GM10248 (cell line): ENCODE measurements at regions of chr17 and their contacts with region 1.

Region 1: GRCh38 chr17:75199886-75200618 is 5.4 kb upstream of the NUP85 start:
- DNase-seq: no peak
- CTCF ChIP-seq: no peak

Region 2: DNA sequence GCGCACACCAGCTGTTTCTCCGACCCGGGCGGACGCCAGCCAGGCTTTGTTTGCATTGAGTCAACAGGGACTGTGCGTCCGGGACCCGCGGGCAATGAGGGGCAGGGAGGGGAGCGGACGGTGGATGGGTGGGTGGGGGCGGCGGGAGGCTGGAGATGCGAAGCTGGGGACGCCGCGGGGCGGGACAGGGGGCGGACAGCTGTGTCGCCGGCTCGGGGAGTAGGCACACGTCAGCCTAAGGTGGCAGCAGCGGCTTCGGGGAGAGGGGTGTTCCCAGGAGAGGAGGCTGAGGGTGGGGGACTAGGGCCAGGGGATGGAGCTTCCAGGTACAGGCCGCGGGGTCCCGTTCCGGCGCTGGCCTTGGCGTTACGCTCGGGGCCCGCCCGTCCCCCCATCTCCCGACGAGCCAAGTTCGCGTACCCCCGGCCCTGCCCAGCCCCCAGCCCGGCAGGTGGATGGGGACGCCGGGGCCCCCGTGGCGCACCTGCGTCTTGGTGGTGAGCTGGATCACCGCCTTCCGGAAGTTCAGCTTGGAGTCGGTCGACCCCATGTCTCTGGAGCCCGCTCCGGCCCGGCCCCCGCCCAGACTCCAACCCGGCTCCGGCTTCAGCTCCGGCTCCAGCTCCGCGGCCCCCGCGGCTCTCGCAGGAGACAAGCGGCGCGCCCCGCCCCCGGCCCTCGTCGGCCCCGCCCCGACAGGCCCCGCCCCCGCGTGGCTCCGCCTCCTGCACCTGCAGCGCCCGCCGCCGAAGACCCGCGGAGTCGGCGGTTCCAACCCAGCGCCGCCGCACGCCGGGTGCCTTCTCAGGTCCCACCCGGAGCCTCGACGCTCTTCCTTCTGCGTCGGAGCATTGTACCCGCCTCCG is 227.7 kb before region 1 on chr17 and contains the start of gene HID1:
- CTCF ChIA-PET with region 1: interaction called, 22 read pairs
- POLR2A ChIA-PET with region 1: no interaction called
- DNase-seq: peak; percentile 86
- CTCF ChIP-seq: no peak

Region 3: DNA sequence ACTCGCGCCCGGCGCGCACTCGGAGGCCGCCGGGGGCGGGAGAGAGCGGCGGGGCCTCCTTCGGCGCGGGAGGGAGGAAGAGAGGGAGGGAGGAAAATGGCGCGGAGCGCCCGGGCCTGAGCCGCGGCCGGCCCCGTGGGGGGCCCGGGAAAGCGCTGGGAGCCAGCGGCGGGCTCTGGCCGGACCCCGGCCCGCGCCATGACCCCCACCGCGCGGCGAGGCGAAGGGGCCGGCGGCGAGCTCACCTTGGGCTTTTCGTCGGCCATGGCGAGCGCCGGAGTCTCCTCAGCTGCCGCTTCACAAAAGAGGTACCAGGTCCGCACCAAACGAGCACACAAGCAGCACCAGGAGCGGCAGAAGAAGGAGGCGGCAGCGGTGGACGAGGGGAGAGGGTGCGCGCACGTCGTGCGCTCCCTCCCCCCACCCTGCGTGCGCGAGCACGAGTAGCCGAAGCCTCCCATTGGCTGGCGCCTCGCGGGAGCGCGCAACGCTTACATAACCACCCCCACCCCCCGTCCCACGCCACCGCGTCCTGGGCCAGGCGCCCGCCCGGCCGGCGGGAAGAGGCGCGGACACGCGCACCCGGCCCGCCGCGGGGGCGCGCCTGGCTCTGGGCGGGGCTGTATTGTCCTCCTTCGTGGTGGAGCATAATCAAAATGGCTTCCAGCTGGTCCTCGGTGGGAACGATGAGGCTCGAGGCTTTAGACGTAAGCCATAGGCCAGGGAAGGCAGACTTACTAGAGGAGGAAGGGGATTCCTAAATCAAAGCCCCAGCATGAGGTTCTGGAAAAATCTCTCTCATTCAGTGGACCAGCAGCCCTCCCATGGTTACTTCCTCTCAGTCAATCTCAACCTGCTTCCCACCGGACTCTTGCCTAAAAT is 17.2 kb before region 1 on chr17 and contains the start of gene SUMO2:
- CTCF ChIA-PET with region 1: interaction called, 113 read pairs
- POLR2A ChIA-PET with region 1: no interaction called
- DNase-seq: peak; percentile 99
- CTCF ChIP-seq: no peak

Region 4: GRCh38 chr17:75219815-75220214 is 19.8 kb after region 1 on chr17:
- CTCF ChIA-PET with region 1: interaction called, 11 read pairs
- POLR2A ChIA-PET with region 1: no interaction called
- DNase-seq: no peak
- CTCF ChIP-seq: no peak